ENCODE measurements at regions of chr12 and their contacts with region 1.

Region 1: DNA sequence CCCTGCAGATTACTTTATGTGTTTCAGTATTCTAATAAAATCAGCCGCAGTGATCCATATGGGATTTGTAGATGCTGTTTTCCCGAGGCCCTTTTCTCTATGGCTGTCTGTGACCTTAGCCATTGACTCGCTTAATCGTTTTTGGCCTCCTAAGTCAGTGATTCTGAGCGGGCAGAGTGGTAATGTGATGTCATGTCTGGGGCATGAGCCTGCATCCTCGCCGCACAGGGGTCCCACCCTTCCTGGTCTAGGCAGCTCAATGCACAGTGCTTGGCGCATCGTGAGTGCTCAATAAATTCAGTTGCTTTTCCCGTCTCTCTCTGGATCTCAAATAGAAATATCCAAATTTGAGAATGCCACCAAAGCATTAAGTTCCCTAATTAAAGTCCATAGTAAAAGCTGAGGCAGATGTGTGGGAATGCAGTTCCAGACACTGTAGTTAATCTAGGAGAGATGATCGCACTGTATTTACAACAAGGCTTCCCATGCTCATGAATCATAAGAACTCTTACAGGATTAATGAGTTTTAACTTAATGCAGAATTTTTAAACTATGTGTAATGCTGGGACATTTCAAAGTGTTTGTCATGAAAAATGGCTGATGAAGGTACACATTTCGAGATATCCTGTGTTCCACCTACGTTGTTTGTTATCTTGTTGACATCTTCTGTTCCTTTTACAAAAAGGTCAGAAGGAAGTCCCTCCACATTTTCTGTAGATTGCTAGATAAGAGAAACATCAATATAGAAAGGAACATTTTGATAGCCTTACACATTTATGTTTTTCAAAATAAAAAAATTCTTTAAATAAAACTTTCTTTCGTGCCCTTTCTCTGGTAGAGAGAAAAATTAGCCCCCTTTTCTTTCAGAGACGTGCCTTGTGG is 29.4 kb downstream of the HMGA2 start:
- DNase-seq: no peak
- ATAC-seq: no peak
- H3K4me3 ChIP-seq: no peak overlapping the region
- H3K27ac ChIP-seq: no peak overlapping the region
- H3K4me1 ChIP-seq: no peaks in the 10 kb centered on the region
- H3K27me3 ChIP-seq: no peaks in the 10 kb centered on the region
- CTCF ChIP-seq: no peak
- EP300 ChIP-seq: no peak
- POLR2A ChIP-seq: no peak
- RAD21 ChIP-seq: no peak

Region 2: DNA sequence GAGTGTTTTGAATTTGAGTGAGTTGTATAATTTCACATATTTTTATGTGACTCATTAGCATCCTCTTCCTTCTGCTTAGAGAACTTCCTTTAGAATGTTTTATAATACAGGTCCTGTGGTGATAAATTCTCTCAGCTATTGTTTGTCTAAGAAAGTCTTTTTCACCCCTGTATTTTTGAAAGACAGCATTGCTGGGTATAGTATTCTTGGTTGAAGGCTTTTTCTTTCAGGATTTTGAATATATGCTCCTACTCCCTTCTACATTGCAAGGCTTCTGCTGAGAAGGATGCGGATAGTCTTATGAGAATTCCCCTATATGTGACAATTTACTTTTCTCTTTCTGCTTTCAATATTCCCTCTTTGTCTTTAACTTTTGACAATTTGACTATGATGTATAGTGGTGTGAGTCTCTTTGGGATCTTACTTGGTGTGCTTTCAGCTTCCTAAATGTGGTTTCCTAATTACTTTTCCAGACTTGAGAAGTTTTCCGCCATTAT is 148.3 kb before region 1 on chr12:
- CTCF ChIA-PET with region 1: no interaction called
- POLR2A ChIA-PET with region 1: interaction called, 10 read pairs
- RAD21 ChIA-PET with region 1: no interaction called
- SMC1A ChIA-PET with region 1: no interaction called
- in situ Hi-C with region 1: no loop called
- intact Hi-C with region 1: no loop called
- DNase-seq: no peak
- ATAC-seq: no peak
- H3K4me3 ChIP-seq: no peak overlapping the region
- H3K27ac ChIP-seq: no peak overlapping the region
- H3K4me1 ChIP-seq: no peaks in the 10 kb centered on the region
- H3K27me3 ChIP-seq: no peaks in the 10 kb centered on the region
- CTCF ChIP-seq: no peak
- EP300 ChIP-seq: no peak
- POLR2A ChIP-seq: no peak
- RAD21 ChIP-seq: no peak

Region 3: DNA sequence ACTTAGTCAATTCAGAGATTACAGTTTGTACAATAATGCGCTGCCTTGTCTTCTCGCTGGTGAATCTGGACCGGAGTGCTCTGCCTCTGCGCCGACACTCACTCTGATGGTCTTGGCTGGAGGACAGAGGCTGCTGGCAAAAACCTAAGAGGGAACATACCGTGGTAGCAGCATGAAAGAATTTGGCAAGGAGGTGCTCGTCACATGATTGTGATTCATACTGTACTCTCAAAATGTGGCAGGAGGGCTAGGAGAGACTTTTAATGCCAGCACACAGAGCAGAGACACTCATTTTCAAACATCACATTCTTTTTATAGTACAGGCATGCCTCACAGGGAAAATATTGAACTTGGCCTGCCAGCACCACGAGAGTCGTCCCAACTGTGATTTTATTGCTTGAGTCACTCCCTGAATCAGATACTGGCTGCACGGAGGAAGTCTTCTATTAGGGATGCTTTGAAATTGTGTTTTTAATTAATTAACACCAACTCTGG is 38.3 kb after region 1 on chr12:
- CTCF ChIA-PET with region 1: no interaction called
- POLR2A ChIA-PET with region 1: no interaction called
- RAD21 ChIA-PET with region 1: no interaction called
- SMC1A ChIA-PET with region 1: no interaction called
- in situ Hi-C with region 1: no loop called
- intact Hi-C with region 1: no loop called
- DNase-seq: no peak
- ATAC-seq: peak; percentile 64
- H3K4me3 ChIP-seq: no peak overlapping the region
- H3K27ac ChIP-seq: no peak overlapping the region
- H3K4me1 ChIP-seq: no peaks in the 10 kb centered on the region; the same call in 1 of the 2 replicates
- H3K27me3 ChIP-seq: no peaks in the 10 kb centered on the region
- CTCF ChIP-seq: no peak
- EP300 ChIP-seq: no peak
- POLR2A ChIP-seq: no peak
- RAD21 ChIP-seq: no peak

Region 4: DNA sequence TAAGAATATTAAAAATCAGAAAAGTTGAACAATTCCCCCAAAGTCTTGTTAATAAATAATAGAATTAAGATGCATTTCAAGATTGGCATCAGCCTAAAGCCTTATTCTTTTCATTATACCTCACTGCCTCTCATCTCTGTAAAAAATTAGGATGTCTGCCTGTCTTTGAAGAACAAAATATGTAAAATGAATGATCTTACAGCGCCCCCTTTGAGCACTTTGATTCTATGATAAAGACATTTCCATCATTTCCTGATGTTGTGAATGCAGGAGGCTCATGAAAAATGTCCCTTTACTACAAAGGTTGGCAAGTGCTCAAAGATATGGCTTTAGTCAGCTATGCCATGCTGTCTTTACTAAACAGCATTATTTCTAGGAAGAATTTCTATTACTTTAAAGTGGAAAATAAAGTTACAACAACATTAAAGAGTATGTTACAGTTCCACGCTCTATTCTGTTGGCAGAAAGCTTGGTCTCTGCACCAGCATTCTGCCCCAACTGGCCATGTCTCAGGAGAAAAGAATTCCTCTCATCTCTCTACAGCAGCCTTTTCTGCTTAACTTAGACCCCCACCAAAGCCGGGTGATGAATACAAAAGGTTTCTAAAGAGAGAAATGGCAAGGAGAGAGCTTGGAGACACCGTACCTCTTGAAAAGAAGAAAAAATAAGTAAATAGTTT is 181.7 kb after region 1 on chr12:
- CTCF ChIA-PET with region 1: no interaction called
- POLR2A ChIA-PET with region 1: no interaction called
- RAD21 ChIA-PET with region 1: no interaction called
- SMC1A ChIA-PET with region 1: no interaction called
- in situ Hi-C with region 1: no loop called
- intact Hi-C with region 1: no loop called
- DNase-seq: no peak
- ATAC-seq: peak; percentile 20; the same call in 1 of the 3 replicates
- H3K4me3 ChIP-seq: no peak overlapping the region
- H3K27ac ChIP-seq: no peak overlapping the region
- H3K4me1 ChIP-seq: peaks cover 12% of the 10 kb centered on the region; the same call in 1 of the 2 replicates
- H3K27me3 ChIP-seq: no peaks in the 10 kb centered on the region
- CTCF ChIP-seq: peak in 2 of 3 experiments; percentile 28 to 34; a peak in 3 of 6 replicates
- EP300 ChIP-seq: no peak
- POLR2A ChIP-seq: no peak
- RAD21 ChIP-seq: peak; percentile 58